Adrenal gland (tissue), 19 donors: ENCODE measurements at regions of chr5 and their contacts with region 1.

Region 1: GRCh38 chr5:57221049-57221568 is 47.2 kb downstream of the GPBP1 start:
- DNase-seq: no peak
- H3K4me3 ChIP-seq: no peak overlapping the region
- H3K27ac ChIP-seq: no peak overlapping the region
- H3K4me1 ChIP-seq: peaks cover 0 to 34% of the 10 kb centered on the region in 2 donors
- H3K27me3 ChIP-seq: no peaks in the 10 kb centered on the region
- CTCF ChIP-seq: peak; percentile 82 to 98 (median 96)
- POLR2A ChIP-seq: no peak

Region 2: DNA sequence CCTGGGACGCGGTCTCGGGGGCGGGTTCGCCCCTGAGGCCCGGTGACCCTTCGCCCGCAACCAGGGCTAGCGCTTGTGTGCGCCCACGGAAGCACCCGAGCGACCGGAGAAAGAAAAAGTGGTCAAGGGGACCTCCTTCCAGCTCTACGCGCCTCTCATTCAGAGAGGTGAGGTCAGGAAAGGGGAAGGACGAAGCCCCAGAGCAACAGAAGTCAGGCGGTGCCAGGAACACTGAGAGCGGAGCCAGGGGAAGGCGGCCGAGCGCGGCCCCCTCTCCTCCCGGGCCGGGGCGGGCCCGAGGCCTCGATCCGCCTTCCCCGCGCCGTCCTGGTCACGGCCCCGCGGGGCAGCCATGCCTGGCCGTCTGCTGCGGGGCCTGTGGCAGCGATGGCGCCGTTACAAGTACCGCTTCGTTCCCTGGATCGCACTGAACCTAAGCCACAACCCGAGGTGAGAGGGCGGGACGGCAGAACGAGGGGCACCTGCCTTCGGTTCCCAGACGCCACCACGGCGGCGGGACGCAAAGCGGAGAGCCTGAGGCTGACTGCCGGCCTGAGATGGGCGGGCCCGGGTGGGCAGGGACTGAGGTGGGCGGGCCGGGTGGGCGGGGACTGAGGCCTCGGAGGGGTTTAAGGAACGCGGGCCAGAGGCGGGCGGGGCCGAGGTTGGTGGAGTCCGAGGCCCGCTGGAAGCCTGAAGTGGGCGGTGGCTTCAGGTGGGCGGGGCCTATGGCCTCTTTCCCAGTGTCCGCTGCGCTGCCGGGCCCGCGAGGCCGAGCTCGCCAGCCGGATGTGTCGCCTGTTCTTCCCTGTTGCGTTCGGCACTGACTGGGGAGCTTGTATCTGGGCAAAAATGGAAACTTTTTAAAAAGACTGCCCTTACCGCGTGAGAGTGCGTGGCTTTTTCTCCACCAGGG is 311.6 kb before region 1 on chr5 and contains the start of gene SETD9:
- intact Hi-C with region 1: loop called in 1 of 2 experiments (anchors 10 kb)
- DNase-seq: peak; percentile 98 to 99 (median 99)
- H3K4me3 ChIP-seq: peak within 1 kb of the TSS; percentile 16 to 73 (median 59)
- H3K27ac ChIP-seq: peak within 1 kb of the TSS; percentile 82 to 99 (median 95)
- H3K4me1 ChIP-seq: peaks cover 0 to 6% of the 10 kb centered on the region in 2 donors
- H3K27me3 ChIP-seq: no peaks in the 10 kb centered on the region
- CTCF ChIP-seq: no peak
- POLR2A ChIP-seq: peak; percentile 57 to 87
- total RNA-seq, gene SETD9: 3.5 to 21.0 (median 11.0) TPM in 8 of 9 donors, not detected in the other

Region 3: DNA sequence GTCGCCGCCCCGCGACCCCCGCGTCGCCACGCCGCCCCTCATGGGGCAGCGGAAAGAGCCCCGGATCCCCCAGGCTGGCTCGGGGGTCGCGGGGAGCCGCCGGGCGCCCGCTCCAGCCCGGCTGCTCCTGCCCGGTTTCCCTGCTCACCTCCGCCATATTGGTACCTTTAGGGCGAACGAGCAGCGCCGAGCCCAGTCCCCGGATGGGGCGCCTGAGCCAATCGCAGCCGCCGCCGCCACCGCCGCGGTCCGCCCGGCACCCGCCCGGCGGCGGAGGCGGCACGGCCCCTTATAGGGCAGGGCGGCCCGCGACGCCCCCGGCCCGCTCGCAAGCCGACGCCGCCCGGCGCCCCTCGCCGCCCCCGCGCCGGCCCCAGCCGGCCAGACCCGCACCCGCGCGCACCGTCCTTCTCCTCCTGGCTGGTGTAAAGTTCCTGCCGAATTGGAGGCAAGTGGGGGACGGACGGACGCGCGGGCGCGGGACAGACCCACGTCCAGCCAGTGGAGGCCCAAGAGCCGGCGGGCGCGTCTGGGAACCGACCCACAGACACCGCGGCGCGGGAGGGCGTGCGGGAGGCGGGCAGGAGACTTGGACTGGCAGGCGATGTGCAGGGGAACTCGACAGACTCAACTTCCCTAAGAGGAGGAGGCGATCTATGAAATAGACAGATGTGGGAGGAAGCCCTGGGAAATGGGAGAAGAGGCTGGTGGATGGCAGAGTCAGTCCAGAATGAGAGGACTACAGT is 269.0 kb before region 1 on chr5 and contains the start of gene MIER3:
- intact Hi-C with region 1: loop called in 1 of 2 experiments (anchors 10 kb)
- DNase-seq: peak; percentile 75 to 85 (median 80)
- H3K4me3 ChIP-seq: peak within 1 kb of the TSS; percentile 4 to 98 (median 68)
- H3K27ac ChIP-seq: peak within 1 kb of the TSS in 4 of 5 donors; percentile 79 to 96 (median 83)
- H3K4me1 ChIP-seq: peaks cover 5 to 13% of the 10 kb centered on the region in 2 donors
- H3K27me3 ChIP-seq: no peaks in the 10 kb centered on the region
- CTCF ChIP-seq: no peak
- POLR2A ChIP-seq: peak in 1 of 2 donors; percentile 24
- total RNA-seq, gene MIER3: 11.2 to 30.2 (median 19.5) TPM